Adrenal gland (tissue), 19 donors: ENCODE measurements at regions of chr1 and their contacts with region 1.

Region 1: DNA sequence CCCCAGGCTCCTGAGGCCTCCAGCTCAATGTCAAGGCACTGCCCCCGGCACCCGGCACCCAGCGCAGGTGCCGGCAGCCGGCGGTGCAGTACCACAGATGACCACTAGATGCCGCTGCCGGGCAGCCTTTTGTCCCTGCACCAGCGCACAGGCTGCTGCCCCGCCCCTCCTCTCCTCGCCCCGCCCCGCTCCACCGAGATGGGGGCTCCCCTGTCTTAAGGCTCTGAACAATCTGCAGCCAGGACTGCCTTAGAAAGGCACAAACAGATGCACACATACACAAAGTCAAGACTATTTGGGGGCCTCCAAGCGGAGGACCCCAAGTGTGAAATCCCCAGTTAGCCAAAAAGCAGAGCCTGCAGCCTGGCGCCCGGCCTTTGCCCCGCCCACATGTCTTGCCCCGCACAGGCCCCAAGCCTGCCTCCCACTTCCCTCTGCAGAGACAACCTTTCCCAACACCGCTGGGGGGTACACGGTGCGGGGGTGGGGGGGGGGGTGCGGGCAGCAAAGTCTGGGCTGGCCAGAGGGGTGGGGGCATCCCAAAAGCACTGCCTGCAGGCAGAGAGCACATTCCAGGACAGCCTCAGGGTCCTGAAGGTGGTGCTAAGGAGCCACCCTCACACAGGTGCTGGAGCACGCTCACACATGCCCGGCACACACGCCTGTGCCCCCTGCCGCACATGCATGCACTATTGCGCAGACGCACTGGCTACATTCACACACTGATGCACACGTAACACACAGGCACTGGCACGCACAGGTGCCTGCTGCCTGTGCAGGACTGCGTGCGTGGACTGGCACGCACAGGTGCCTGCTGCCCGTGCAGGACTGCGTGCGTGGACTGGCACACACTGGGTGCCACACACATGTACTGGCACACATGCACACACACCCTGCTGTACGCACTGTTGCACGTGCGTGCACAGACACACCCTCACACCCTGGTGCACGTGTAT is 37.1 kb downstream of the ARHGEF16 start:
- DNase-seq: peak; percentile 53 to 78 (median 73)
- H3K4me3 ChIP-seq: no peak overlapping the region
- H3K27ac ChIP-seq: no peak overlapping the region
- H3K4me1 ChIP-seq: no peaks in the 10 kb centered on the region
- H3K27me3 ChIP-seq: peaks cover 8% of the 10 kb centered on the region
- CTCF ChIP-seq: peak; percentile 86 to 100 (median 94)
- POLR2A ChIP-seq: no peak

Region 2: GRCh38 chr1:3599816-3600215 is 108.2 kb after region 1 on chr1:
- intact Hi-C with region 1: loop called in 1 of 2 experiments (anchors 5 kb)
- DNase-seq: no peak
- H3K4me3 ChIP-seq: no peak overlapping the region
- H3K27ac ChIP-seq: no peak overlapping the region
- H3K4me1 ChIP-seq: peaks cover 0 to 9% of the 10 kb centered on the region in 2 donors
- H3K27me3 ChIP-seq: peaks cover 4% of the 10 kb centered on the region
- CTCF ChIP-seq: no peak
- POLR2A ChIP-seq: no peak

Region 3: GRCh38 chr1:3618881-3619671 is 127.5 kb after region 1 on chr1:
- intact Hi-C with region 1: loop called (anchors 2 kb)
- DNase-seq: peak; percentile 61 to 88 (median 77)
- H3K4me3 ChIP-seq: no peak overlapping the region
- H3K27ac ChIP-seq: no peak overlapping the region
- H3K4me1 ChIP-seq: peaks cover 10 to 18% of the 10 kb centered on the region in 2 donors
- H3K27me3 ChIP-seq: peaks cover 3% of the 10 kb centered on the region
- CTCF ChIP-seq: peak; percentile 59 to 87 (median 74)
- POLR2A ChIP-seq: no peak

Region 4: GRCh38 chr1:3721955-3722465 is 230.4 kb after region 1 on chr1:
- intact Hi-C with region 1: loop called (anchors 5 to 10 kb)
- DNase-seq: no peak
- H3K4me3 ChIP-seq: no peak overlapping the region
- H3K27ac ChIP-seq: no peak overlapping the region
- H3K4me1 ChIP-seq: no peaks in the 10 kb centered on the region
- H3K27me3 ChIP-seq: peaks cover 6% of the 10 kb centered on the region
- CTCF ChIP-seq: no peak
- POLR2A ChIP-seq: no peak

Region 5: GRCh38 chr1:3727042-3727824 is 235.7 kb after region 1 on chr1:
- intact Hi-C with region 1: loop called (anchors 5 to 10 kb)
- DNase-seq: peak in 2 of 7 donors; percentile 35 to 45
- H3K4me3 ChIP-seq: no peak overlapping the region
- H3K27ac ChIP-seq: no peak overlapping the region
- H3K4me1 ChIP-seq: no peaks in the 10 kb centered on the region
- H3K27me3 ChIP-seq: no peaks in the 10 kb centered on the region
- CTCF ChIP-seq: peak; percentile 13 to 40 (median 23)
- POLR2A ChIP-seq: no peak